Transverse colon (tissue), 4 donors: ENCODE measurements at regions of chr18 and their contacts with region 1.

Region 1: GRCh38 chr18:36265015-36265414 is 32.5 kb upstream of the FHOD3 start:
- DNase-seq: no peak
- H3K4me3 ChIP-seq: no peak overlapping the region
- H3K27ac ChIP-seq: no peak overlapping the region
- H3K4me1 ChIP-seq: no peaks in the 10 kb centered on the region
- H3K27me3 ChIP-seq: no peaks in the 10 kb centered on the region
- CTCF ChIP-seq: no peak
- EP300 ChIP-seq: no peak
- POLR2A ChIP-seq: no peak

Region 2: DNA sequence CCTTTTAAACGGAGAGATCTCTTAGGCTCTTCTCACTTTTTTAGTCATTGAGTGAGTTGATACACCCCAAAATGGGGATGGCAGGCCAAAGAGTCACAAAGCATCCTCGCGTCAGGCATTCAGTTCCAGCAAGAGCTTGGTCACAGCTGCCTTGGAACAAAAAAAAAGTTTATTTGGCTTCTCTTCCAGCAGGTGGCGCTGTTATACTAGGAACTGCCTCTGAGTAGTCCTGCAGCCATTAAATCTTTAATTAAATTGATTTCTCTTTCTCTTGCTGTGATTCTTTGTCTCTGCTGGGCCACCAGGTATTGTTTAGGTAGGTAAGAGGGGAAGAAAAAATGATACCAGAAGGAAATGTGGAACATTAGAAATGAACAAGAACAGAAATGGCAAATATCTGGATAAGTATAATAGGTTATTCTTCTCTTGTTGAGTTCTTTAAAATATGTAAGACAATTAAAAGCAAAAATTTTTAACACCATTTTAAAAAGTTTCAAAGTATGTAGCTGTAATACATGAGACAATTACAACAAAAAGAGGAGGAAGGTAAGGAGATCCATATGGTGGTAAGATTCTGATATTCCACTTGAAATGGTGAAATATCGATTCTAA is 508.4 kb before region 1 on chr18:
- in situ Hi-C with region 1: loop called in 1 of 4 experiments (anchors 25 kb)
- intact Hi-C with region 1: no loop called
- DNase-seq: peak; percentile 35
- H3K4me3 ChIP-seq: no peak overlapping the region
- H3K27ac ChIP-seq: no peak overlapping the region
- H3K4me1 ChIP-seq: no peaks in the 10 kb centered on the region
- H3K27me3 ChIP-seq: peaks cover 15% of the 10 kb centered on the region
- CTCF ChIP-seq: peak; percentile 73 to 82 (median 76)
- EP300 ChIP-seq: no peak
- POLR2A ChIP-seq: no peak

Region 3: GRCh38 chr18:36186911-36187834 is 77.8 kb before region 1 on chr18 and contains the start of gene MOCOS:
- in situ Hi-C with region 1: no loop called
- intact Hi-C with region 1: no loop called
- DNase-seq: peak; percentile 90
- H3K4me3 ChIP-seq: peak within 1 kb of the TSS; percentile 45 to 75 (median 66)
- H3K27ac ChIP-seq: peak within 1 kb of the TSS; percentile 32 to 78 (median 77)
- H3K4me1 ChIP-seq: peaks cover 9 to 17% (median 13%) of the 10 kb centered on the region in 4 donors
- H3K27me3 ChIP-seq: no peaks in the 10 kb centered on the region
- CTCF ChIP-seq: no peak
- EP300 ChIP-seq: no peak
- POLR2A ChIP-seq: peak; percentile 75
- total RNA-seq, gene MOCOS: 2.6 to 5.7 (median 4.4) TPM

Region 4: DNA sequence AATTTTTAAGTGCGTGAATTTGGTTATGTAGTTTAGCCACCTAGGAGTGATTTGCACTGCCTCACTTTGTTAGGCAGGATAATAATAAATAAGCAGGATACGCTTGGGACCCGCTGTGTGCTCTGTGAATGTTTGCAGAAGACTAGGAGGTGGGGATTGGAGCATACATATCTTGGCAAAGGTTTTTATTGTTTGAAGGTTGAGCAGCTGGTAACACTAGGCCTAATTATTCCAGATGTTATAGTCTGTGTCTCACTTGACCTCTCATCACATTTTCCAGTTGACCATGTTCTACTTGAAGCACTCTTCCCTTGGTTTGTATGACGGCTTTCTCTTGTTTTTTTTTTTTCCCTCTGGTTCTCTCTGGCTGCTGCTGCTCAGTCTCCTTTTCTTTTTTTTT is 75.2 kb after region 1 on chr18:
- in situ Hi-C with region 1: no loop called
- intact Hi-C with region 1: no loop called
- DNase-seq: no peak
- H3K4me3 ChIP-seq: no peak overlapping the region
- H3K27ac ChIP-seq: no peak overlapping the region
- H3K4me1 ChIP-seq: peaks cover 0 to 14% (median 7%) of the 10 kb centered on the region in 4 donors
- H3K27me3 ChIP-seq: no peaks in the 10 kb centered on the region
- CTCF ChIP-seq: no peak
- EP300 ChIP-seq: no peak
- POLR2A ChIP-seq: no peak

Region 5: GRCh38 chr18:36757081-36757480 is 492.1 kb after region 1 on chr18:
- in situ Hi-C with region 1: no loop called
- intact Hi-C with region 1: no loop called
- DNase-seq: no peak
- H3K4me3 ChIP-seq: no peak overlapping the region
- H3K27ac ChIP-seq: no peak overlapping the region
- H3K4me1 ChIP-seq: peaks cover 0 to 8% (median 3%) of the 10 kb centered on the region in 4 donors
- H3K27me3 ChIP-seq: no peaks in the 10 kb centered on the region
- CTCF ChIP-seq: peak; percentile 62 to 80 (median 66)
- EP300 ChIP-seq: no peak
- POLR2A ChIP-seq: no peak